Activated CD8-positive, alpha-beta T cell treated with anti-CD3 and anti-CD28 coated beads, Interleukin-2, amount 10 ng/mL, durations not matched to agents 7 days and 5 days (primary cell): ENCODE measurements at regions of chr12 and their contacts with region 1.

Region 1: GRCh38 chr12:724194-724855 is 28.1 kb upstream of the WNK1 start:
- DNase-seq: peak; percentile 46
- ATAC-seq: peak; percentile 77
- H3K4me3 Mint-ChIP-seq: peak overlapping the region; percentile 11
- H3K27ac Mint-ChIP-seq: peak overlapping the region; percentile 78
- H3K4me1 Mint-ChIP-seq: peaks cover 72% of the 10 kb centered on the region
- H3K27me3 Mint-ChIP-seq: no peaks in the 10 kb centered on the region

Region 2: DNA sequence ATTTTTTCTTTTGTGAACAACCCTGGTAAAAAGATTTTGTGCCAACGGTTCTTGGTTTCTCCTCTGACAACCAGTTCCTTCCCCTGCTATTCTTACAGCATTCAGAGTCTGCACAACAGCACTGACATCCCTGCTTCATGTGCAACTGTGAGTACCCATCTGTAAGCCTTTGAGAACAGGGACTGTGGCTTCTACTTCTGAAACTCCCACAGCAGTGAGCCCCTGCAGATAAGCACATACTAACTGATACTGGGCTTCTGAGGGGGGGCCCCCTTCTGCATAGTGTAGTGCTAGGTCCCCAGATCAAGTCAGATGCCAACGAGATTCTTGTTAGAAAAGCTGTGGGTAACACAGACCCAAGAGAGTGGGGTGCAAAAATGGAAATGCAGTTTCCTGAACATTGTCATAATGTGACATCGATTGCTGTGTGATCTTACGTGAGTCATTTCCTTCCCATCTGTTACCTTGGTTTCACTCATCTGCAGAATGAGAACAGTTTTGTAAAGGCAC is 50.0 kb before region 1 on chr12:
- CTCF ChIA-PET with region 1: interaction called, 19 read pairs
- POLR2A ChIA-PET with region 1: interaction called, 10 read pairs
- DNase-seq: peak; percentile 82
- ATAC-seq: peak; percentile 92
- H3K4me3 Mint-ChIP-seq: peak overlapping the region; percentile 61
- H3K27ac Mint-ChIP-seq: peak overlapping the region; percentile 94
- H3K4me1 Mint-ChIP-seq: peaks cover 70% of the 10 kb centered on the region
- H3K27me3 Mint-ChIP-seq: no peaks in the 10 kb centered on the region

Region 3: DNA sequence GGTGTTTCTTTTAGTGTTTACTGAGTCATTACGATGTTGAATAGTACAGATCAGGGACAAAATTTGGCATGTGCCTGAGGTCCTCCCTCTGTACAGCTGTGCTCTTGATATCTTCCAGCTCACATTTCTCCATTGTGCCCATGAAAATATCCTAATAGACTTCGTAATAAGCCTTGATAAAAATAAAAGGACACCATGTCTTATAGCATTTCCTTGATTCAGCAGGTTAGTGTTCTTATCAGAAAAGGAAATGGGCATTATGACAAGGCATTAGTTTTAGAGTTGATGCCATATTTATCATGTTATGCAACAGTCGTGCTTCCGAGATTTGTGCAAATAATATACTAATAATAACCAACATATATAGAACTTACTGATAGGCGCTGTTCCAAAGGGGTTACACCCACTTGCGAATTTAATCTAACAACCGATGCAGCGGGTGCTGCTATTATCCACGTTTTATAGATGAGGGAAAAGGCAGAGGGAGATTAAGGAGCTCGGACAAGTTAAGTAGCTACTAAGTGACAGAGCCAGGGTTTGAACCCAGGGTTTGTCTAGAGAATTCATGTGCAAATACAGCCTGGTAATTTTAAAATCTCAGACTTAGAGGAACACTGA is 12.9 kb after region 1 on chr12:
- CTCF ChIA-PET with region 1: interaction called, 11 read pairs
- POLR2A ChIA-PET with region 1: interaction called, 6 read pairs
- DNase-seq: no peak
- ATAC-seq: no peak
- H3K4me3 Mint-ChIP-seq: no peak overlapping the region
- H3K27ac Mint-ChIP-seq: no peak overlapping the region
- H3K4me1 Mint-ChIP-seq: peaks cover 8% of the 10 kb centered on the region
- H3K27me3 Mint-ChIP-seq: no peaks in the 10 kb centered on the region